Activated T-helper 1 cell treated with anti-CD3 and anti-CD28 coated beads, Interleukin-12 subunit alpha, Interleukin-12 subunit beta, Interleukin-2, Interleukin-4 antibody, amounts not matched to agents 30 ng/mL and 10 ng/mL and 1 ng/mL, durations not matched to agents 14 hours and 24 hours and 36 hours (primary cell): ENCODE measurements at regions of chr4 and their contacts with region 1.

Region 1: DNA sequence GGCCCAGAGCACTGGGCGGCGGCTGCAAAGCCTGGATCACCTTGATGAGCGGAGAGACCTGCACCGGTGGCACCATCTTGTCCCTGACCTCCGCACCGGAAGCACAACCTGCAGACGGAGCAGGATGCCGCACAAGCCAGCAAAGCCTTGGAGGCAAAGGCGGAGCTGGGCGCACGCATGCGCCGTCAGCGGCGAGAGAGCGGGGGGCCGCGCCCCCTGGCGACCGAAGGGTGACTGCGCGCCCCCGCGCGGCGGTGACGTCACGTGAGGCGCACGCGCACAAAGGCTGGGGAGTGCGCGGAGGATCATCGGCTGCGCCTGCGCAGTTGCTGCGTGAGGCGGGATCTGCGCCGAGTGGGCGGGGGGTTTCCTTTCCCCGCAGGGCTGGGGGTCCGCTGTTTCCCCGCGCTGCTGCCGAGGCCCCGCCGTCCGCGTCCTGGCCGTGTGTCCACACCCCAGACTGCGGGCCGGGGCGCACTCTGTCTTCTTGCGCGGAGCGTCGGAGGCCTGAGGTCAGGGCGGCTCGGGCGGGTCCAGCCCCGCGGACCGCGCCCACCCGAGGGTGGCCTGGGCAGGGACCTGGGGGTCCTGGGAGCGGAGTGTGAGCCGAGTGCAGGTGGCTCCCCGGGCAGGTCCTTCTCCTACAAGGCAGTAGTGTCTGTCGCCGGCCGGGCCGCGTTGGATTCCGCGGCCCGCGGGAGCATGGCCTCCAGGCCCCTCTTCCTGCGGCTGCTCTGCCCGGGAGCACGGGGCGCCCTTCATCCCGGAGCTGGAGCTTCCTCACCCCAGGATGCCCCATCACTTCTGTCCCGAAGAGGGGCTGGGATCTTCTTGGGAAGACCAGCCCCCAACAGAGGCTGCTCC is at the starts of genes ATP5ME and MYL5:
- DNase-seq: peak; percentile 97
- H3K4me3 Mint-ChIP-seq: peak within 1 kb of the TSS; percentile 88
- H3K27ac Mint-ChIP-seq: peak within 1 kb of the TSS; percentile 90
- H3K4me1 Mint-ChIP-seq: peaks cover 7% of the 10 kb centered on the region
- H3K27me3 Mint-ChIP-seq: peaks cover 1% of the 10 kb centered on the region
- total RNA-seq, gene ATP5ME: 217 and 224 TPM in 2 replicates
- total RNA-seq, gene MYL5: 29.7 and 35.0 TPM in 2 replicates

Region 2: DNA sequence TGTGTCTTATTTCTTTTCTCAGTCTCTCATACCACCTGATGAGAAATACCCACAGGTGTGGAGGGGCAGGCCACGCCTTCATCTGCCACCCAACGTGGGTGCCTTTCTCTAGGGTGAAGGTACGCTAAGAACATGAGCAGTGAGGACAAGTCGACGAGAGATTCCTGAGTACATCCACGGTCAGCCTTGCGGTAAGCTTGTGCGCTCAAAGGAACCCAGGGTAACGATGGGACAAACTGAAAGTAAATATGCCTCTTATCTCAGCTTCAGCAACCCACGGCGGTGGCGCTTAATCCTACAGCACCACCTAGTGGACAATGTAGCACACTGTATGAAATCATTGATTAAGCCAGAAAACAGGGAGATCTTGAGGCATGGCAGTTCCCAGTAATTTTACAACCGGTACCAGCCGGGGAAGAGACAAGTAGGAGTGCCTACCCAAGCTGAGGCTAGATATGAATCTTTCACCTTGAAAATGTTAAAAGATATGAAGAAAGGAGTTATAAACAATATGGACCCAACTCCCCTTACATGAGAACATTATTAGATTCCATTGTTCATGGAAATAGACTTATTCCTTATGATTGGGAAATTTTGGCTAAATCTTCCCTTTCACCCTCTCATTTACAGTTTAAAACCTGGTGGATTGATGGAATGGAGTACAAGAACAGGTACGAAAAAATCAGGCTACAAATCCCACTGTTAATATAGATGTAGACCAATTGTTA is 432.1 kb before region 1 on chr4:
- intact Hi-C with region 1: loop called (anchors 5 kb)
- DNase-seq: peak; percentile 53
- H3K4me3 Mint-ChIP-seq: peak overlapping the region; percentile 70
- H3K27ac Mint-ChIP-seq: peak overlapping the region; percentile 15
- H3K4me1 Mint-ChIP-seq: peaks cover 13% of the 10 kb centered on the region
- H3K27me3 Mint-ChIP-seq: no peaks in the 10 kb centered on the region

Region 3: GRCh38 chr4:498328-498904 is 176.0 kb before region 1 on chr4:
- intact Hi-C with region 1: loop called (anchors 1 kb)
- DNase-seq: no peak
- H3K4me3 Mint-ChIP-seq: peak overlapping the region; percentile 97
- H3K27ac Mint-ChIP-seq: peak overlapping the region; percentile 96
- H3K4me1 Mint-ChIP-seq: peaks cover 32% of the 10 kb centered on the region
- H3K27me3 Mint-ChIP-seq: no peaks in the 10 kb centered on the region

Region 4: DNA sequence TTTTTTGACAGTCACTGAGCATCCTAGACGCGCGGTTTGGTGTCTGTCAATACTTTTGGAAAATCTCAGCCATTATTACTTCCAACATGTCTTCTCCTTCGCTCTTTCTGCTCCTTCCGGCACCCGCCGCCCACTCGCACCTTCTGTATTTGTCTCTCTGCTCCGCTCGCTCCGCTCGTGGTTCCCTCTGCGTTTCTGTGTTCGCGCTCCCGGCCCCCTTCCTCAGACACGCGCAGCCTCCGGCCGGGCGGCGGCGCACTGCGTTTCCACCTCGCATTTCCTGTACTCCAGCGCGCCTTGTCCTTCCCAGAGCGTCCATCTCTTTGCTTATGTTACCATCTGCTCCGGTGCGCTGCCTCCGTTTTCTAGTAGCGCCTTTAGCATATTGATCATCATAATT is 27.9 kb before region 1 on chr4:
- intact Hi-C with region 1: no loop called
- DNase-seq: no peak
- H3K4me3 Mint-ChIP-seq: peak overlapping the region; percentile 30
- H3K27ac Mint-ChIP-seq: peak overlapping the region; percentile 0
- H3K4me1 Mint-ChIP-seq: no peaks in the 10 kb centered on the region
- H3K27me3 Mint-ChIP-seq: no peaks in the 10 kb centered on the region

Region 5: GRCh38 chr4:663438-664428 is 10.7 kb before region 1 on chr4:
- intact Hi-C with region 1: loop called (anchors 1 kb)
- DNase-seq: peak; percentile 71
- H3K4me3 Mint-ChIP-seq: peak overlapping the region; percentile 86
- H3K27ac Mint-ChIP-seq: peak overlapping the region; percentile 68
- H3K4me1 Mint-ChIP-seq: peaks cover 8% of the 10 kb centered on the region
- H3K27me3 Mint-ChIP-seq: no peaks in the 10 kb centered on the region

Region 6: DNA sequence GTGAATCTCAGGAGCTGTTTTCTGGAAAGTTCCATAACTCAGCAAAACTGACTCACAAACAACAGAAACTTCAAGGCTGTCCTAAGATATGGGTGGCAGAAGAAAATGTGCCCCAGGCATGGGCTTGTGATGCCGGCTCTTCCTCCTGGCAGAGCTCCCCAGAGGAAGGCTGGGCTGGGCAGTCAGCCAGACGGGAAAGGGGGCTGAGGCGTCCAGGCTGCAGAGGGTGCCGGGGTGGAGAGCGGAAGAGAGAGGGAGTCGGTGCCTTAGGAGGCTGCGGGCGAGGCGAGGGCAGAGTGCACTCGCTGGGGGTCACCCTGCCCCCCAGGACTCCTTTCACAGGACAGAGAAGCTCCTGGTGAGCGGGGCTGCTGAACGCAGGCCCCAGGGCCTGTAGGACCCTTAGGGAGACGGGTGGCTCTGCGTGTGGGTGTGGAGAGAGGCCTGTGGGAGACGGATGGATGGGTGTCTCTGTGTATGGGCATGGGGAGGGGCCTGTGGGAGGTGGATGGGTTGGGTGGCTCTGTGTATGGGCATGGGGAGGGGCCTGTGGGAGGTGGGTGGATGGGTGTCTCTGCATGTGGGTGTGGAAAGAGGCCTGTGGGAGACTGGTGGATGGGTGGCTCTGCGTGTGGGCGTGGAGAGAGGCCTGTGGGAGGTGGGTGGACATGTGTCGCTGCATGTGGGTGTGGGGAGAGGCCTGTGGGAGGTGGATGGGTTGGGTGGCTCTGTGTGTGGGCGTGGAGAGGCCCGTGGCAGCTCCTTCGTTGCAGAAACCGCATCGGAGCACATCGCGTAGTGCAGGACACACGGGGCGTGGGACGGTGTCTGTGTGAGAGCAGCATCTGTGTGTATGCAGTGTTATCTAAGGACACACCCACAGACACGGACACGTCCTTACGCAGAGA is 47.1 kb after region 1 on chr4:
- intact Hi-C with region 1: no loop called
- DNase-seq: no peak
- H3K4me3 Mint-ChIP-seq: no peak overlapping the region
- H3K27ac Mint-ChIP-seq: no peak overlapping the region
- H3K4me1 Mint-ChIP-seq: no peaks in the 10 kb centered on the region
- H3K27me3 Mint-ChIP-seq: no peaks in the 10 kb centered on the region

Region 7: DNA sequence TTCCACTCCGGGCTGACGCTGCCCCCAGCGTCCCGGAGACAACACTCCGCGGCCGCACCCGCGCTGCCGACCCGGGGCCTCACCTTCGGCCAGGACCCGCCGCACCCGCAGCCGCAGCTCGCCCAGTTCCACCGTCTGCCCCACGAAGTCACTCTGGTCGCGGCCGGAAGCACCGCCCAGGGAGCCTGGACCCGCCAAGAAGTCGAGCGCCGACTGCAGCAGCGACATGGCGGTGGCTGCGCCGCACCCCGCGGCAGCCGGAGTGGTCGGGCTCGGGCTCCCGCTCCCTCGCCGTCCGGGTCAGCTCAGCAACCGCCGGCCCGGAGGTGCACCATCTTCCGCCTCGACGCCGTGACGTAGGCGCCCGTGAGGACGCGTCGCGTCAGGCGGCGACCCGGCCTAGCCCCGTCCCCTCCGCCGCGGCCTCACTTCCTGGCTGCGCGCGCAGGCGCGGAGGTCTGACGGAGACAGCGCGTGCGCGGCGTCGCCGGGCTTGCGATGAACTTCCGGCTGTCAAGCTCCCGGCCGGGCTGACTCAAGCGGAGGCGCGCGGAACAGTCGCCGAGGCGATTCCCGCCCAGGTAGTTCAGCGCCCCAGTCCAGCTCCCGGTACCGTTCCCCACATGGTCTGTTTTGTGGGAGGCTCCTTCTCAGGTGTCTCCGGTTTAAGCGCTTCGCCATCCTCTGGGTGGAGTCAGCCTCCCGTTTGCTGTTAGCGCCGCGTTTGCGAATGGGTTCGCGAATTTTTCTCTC is 257.7 kb after region 1 on chr4 and contains the starts of genes GAK and TMEM175:
- intact Hi-C with region 1: loop called (anchors 1 kb)
- DNase-seq: peak; percentile 99
- H3K4me3 Mint-ChIP-seq: peak within 1 kb of the TSS; percentile 97
- H3K27ac Mint-ChIP-seq: peak within 1 kb of the TSS; percentile 90
- H3K4me1 Mint-ChIP-seq: peaks cover 34% of the 10 kb centered on the region
- H3K27me3 Mint-ChIP-seq: no peaks in the 10 kb centered on the region
- total RNA-seq, gene GAK: 146 and 149 TPM in 2 replicates
- total RNA-seq, gene TMEM175: 15.4 and 16.2 TPM in 2 replicates